Breast epithelium (tissue), 4 donors: ENCODE measurements at regions of chr9 and their contacts with region 1.

Region 1: DNA sequence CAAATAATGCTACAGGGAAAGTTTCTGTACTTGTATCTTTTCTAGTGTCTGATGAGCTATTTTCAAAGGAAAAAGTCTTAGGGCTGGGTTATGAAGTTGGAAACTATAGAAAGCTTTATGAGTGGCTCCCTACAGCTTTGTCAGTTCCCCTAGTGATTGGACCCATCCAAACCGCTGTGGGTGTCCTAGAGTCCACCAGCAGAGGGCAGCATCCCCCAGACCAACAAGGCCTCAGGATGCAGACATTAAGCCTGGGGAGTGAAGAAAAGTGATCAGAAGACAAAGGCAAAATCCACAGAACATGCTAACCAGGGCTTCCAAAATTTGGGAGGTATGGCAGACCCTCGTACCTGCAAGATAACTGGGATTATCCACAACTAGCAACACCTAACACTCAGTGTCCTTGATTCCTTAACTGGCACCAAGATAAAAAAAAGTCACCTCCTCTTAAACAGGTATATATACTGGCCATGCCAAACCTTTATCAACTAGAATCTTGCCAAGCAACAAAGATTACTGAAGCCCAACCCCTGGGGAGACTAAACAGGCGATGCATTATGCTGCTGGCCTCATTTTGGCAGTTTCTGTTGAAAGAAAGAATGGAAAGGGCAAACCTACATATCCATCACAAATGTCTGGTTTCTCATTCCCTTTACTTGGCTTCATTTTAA is 110.4 kb upstream of the NR5A1 start:
- DNase-seq: peak; percentile 66 to 79
- H3K4me3 ChIP-seq: no peak overlapping the region
- H3K27ac ChIP-seq: no peak overlapping the region
- H3K4me1 ChIP-seq: no peaks in the 10 kb centered on the region
- H3K27me3 ChIP-seq: no peaks in the 10 kb centered on the region
- CTCF ChIP-seq: peak; percentile 58 to 88 (median 80)
- POLR2A ChIP-seq: no peak

Region 2: GRCh38 chr9:124532897-124533296 is 84.7 kb before region 1 on chr9:
- intact Hi-C with region 1: no loop called
- DNase-seq: no peak
- H3K4me3 ChIP-seq: no peak overlapping the region
- H3K27ac ChIP-seq: no peak overlapping the region
- H3K4me1 ChIP-seq: no peaks in the 10 kb centered on the region
- H3K27me3 ChIP-seq: no peaks in the 10 kb centered on the region
- CTCF ChIP-seq: no peak
- POLR2A ChIP-seq: no peak

Region 3: DNA sequence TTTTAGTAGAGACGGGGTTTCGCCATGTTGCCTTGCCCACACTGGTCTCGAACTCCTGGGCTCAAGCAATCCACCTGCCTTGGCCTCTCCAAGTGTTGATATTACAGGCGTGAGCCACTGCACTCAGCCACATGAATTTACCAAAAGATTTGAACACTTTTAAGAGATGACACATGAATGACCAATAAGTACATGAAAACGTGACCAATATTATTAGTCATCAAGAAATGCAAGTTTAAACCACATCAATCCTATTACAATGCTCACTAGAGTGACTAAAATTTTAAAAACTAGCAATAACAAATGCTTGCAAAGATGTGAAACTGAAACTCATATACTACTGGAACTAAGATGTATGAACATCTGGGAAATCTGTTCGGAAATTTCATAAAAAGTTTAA is 99.2 kb after region 1 on chr9:
- intact Hi-C with region 1: loop called (anchors 10 kb)
- DNase-seq: no peak
- H3K4me3 ChIP-seq: no peak overlapping the region
- H3K27ac ChIP-seq: no peak overlapping the region
- H3K4me1 ChIP-seq: no peaks in the 10 kb centered on the region
- H3K27me3 ChIP-seq: no peaks in the 10 kb centered on the region
- CTCF ChIP-seq: no peak
- POLR2A ChIP-seq: no peak